ENCODE measurements at regions of chr9 and their contacts with region 1.

Region 1: DNA sequence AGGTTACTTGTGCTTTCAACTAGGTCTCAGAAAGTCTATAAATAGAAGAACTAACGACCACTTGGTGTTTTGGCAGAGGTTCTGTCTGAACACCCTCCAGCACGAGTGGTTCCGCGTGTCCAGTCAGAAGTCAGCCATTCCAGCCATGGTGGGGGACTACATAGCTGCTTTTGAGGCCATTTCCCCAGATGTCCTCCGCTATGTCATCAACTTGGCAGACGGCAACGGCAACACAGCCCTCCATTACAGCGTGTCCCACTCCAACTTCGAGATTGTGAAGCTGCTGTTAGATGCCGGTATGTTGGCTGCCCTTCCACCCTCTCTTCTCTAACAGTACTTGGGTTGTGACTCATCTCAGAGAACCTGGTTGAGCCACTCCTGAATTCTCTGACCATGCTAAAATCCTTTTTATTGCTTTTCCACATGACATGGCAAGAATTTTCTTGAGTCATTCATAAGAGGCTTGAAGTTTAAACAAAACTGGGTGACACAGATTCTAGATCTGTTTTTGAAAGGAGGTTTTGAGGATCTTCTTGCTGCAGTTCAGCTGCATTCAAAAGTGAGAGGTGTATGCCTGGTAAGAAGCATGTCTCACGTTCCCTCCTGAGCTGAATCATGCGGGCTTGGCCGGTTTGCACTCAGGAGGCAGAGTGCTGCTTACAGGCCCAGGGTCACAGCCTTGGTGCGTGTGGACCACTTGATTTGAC is 103.1 kb upstream of the DMRT1 start:
- DNase-seq: peak; percentile 93
- H3K4me3 ChIP-seq: no peak overlapping the region
- H3K27ac ChIP-seq: peak overlapping the region; percentile 80 to 96 (median 90)
- H3K4me1 ChIP-seq: peaks cover 0 to 86% (median 64%) of the 10 kb centered on the region in 4 donors
- H3K27me3 ChIP-seq: no peaks in the 10 kb centered on the region
- CTCF ChIP-seq: no peak
- EP300 ChIP-seq: peak in 3 of 4 donors; percentile 40 to 75 (median 70)
- POLR2A ChIP-seq: no peak

Region 2: DNA sequence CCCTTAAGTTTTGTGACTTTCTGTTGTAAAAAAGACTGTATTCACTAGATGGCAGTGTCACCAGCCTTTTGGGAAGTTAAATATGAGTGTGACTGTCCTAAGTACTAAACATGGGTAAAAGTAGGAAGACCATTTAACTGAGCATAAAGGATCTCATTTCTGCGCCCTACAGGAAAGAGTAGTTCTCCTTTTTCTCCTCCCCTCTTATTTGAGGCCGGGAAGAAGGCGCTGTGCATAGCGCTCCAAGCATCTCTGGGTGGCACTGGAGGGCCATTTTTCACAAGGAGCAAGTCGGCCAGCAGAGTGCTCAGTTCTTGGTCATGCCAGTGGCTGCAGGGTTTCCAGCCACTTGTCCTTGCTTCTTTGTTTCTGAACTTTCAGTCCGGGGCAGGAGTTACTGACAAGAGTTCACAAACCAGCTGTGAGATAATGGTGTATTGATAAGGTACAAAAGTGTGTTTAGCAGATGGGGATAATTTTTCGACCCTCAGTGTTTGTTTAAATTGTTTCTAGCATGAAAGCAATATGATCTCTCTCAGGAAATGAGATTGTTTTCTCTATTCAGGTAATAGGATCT is 124.5 kb before region 1 on chr9:
- intact Hi-C with region 1: loop called (anchors 5 kb)
- DNase-seq: peak; percentile 92
- H3K4me3 ChIP-seq: no peak overlapping the region
- H3K27ac ChIP-seq: peak overlapping the region; percentile 61 to 79 (median 72)
- H3K4me1 ChIP-seq: peaks cover 0 to 46% (median 34%) of the 10 kb centered on the region in 4 donors
- H3K27me3 ChIP-seq: no peaks in the 10 kb centered on the region
- CTCF ChIP-seq: peak; percentile 86 to 96 (median 90)
- EP300 ChIP-seq: no peak
- POLR2A ChIP-seq: no peak

Region 3: DNA sequence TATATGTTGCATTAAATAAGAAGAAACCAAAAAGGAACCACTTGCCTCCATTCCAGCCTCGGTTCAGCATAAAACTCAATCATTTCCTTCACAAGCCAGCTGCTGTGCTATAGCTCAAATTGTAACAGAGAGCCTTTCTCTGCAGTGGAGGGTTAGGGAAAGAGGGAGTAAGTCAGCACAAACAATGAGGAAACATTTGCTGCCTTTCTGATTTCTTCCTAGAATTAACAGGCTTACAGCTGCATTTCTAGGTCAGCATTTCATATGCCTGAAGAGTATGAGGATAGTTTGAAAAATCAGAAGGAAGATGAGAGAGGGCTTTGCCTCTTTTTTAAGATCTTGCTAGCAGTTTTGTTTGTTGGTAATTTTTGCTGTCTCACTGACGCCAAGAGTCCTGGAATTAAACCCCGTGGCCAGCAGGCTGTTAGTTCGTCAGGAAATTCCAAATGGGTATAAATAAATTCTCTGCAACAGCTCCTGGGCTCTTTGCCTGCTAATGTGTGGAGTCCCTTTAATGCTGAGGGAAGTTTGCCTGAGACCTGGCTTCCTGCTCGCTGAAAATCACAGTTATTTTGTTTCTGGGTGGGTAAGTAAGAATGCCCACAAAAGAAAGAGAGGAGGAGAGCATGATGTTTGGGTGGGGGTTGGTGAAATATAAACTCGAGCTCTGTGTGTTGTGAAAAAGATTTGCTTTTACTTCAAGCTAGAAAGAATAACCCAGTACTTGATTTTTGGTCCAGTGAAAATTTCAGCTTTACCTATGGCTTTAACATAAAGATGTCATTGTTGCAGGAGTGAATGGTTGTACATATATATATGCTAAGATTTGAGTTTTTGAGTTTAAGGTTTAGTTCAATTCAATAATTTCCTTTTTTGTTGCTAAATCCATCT is 44.9 kb before region 1 on chr9:
- intact Hi-C with region 1: loop called (anchors 2 kb)
- DNase-seq: peak; percentile 93
- H3K4me3 ChIP-seq: peak overlapping the region; percentile 12 to 41 (median 33)
- H3K27ac ChIP-seq: peak overlapping the region; percentile 80 to 96 (median 91)
- H3K4me1 ChIP-seq: peaks cover 0 to 86% (median 68%) of the 10 kb centered on the region in 4 donors
- H3K27me3 ChIP-seq: no peaks in the 10 kb centered on the region
- CTCF ChIP-seq: no peak
- EP300 ChIP-seq: peak; percentile 65 to 94 (median 82)
- POLR2A ChIP-seq: peak in 1 of 2 donors; percentile 39